Activated CD4-positive, alpha-beta T cell treated with anti-CD3 and anti-CD28 coated beads for 36 hours (primary cell): ENCODE measurements at regions of chr18 and their contacts with region 1.

Region 1: DNA sequence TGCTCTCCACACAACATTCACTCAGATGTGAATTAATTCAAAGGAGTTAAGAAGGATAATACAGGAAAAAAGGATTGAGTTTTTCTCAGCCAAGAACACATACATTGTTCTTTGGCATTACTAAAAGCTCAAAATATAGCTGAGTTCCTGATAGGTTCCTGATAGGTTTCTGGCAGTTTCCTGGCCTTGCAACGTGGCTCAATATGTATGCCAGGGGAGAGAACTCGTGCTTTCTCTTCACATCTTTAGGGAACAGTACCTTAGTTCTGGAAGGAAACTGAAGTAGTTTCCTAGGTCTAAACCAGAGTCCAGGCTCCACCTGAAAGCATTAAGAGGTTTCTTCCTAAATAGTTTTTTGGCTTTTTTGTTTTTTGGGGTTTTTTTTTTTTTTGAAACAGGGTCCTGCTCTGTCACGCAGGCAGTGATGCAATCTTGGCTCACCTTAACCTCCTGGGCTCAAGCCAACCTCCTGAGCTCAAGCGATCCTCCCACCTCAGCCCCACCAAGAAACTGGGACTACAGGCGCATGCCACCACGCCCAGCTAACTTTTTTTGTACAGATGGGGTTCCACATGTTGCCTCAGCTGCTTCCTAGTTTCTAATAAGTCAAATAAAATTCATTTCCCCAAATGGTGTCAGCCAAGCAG is 42.8 kb downstream of the ESCO1 start:
- DNase-seq: no peak
- ATAC-seq: no peak
- H3K4me3 Mint-ChIP-seq: no peak overlapping the region
- H3K27ac Mint-ChIP-seq: no peak overlapping the region
- H3K4me1 Mint-ChIP-seq: peaks cover under 1% of the 10 kb centered on the region
- H3K27me3 Mint-ChIP-seq: no peaks in the 10 kb centered on the region

Region 2: DNA sequence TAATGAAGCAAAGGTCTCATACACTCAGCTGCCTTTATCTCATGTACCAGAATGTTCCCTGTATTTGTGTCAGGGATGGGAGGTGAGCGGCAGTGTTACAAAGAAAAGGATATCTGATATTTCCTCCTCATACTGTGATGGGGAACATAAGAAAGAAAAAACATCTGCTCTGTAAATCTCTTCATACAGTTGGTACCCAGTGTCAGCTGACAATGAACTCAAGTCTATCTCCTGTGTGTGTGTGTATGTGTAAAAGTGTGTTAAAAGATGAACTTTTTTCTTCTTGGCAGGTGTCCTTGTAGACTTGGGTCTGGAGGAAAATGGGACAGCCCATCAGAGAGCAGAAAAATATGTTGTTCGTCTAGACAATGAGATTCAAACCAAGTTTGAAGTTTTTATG is 85.0 kb before region 1 on chr18:
- CTCF ChIA-PET with region 1: no interaction called
- POLR2A ChIA-PET with region 1: no interaction called
- intact Hi-C with region 1: no loop called
- DNase-seq: no peak
- ATAC-seq: no peak
- H3K4me3 Mint-ChIP-seq: no peak overlapping the region
- H3K27ac Mint-ChIP-seq: no peak overlapping the region
- H3K4me1 Mint-ChIP-seq: no peaks in the 10 kb centered on the region
- H3K27me3 Mint-ChIP-seq: peaks cover 9% of the 10 kb centered on the region

Region 3: GRCh38 chr18:21513292-21513691 is 44.4 kb before region 1 on chr18:
- CTCF ChIA-PET with region 1: no interaction called
- POLR2A ChIA-PET with region 1: interaction called, 4 read pairs
- intact Hi-C with region 1: loop called in 1 of 2 experiments (anchors 5 kb)
- DNase-seq: no peak
- ATAC-seq: no peak
- H3K4me3 Mint-ChIP-seq: no peak overlapping the region
- H3K27ac Mint-ChIP-seq: no peak overlapping the region
- H3K4me1 Mint-ChIP-seq: no peaks in the 10 kb centered on the region
- H3K27me3 Mint-ChIP-seq: no peaks in the 10 kb centered on the region

Region 4: GRCh38 chr18:21526463-21526862 is 31.3 kb before region 1 on chr18:
- CTCF ChIA-PET with region 1: no interaction called
- POLR2A ChIA-PET with region 1: no interaction called
- intact Hi-C with region 1: loop called in 1 of 2 experiments (anchors 5 kb)
- DNase-seq: no peak
- ATAC-seq: no peak
- H3K4me3 Mint-ChIP-seq: no peak overlapping the region
- H3K27ac Mint-ChIP-seq: no peak overlapping the region
- H3K4me1 Mint-ChIP-seq: no peaks in the 10 kb centered on the region
- H3K27me3 Mint-ChIP-seq: no peaks in the 10 kb centered on the region